Aorta (tissue), 5 donors: ENCODE measurements at regions of chr18 and their contacts with region 1.

Region 1: GRCh38 chr18:12236934-12237832 is 17.0 kb upstream of the CIDEA start:
- DNase-seq: peak; percentile 86 to 92
- ATAC-seq: peak; percentile 85
- H3K4me3 ChIP-seq: no peak overlapping the region
- H3K27ac ChIP-seq: no peak overlapping the region
- H3K4me1 ChIP-seq: peaks cover 0 to 2% of the 10 kb centered on the region in 2 donors
- H3K27me3 ChIP-seq: no peaks in the 10 kb centered on the region

Region 2: GRCh38 chr18:12049978-12050811 is 187.0 kb before region 1 on chr18:
- intact Hi-C with region 1: no loop called
- DNase-seq: no peak
- ATAC-seq: no peak
- H3K4me3 ChIP-seq: no peak overlapping the region
- H3K27ac ChIP-seq: no peak overlapping the region
- H3K4me1 ChIP-seq: no peaks in the 10 kb centered on the region
- H3K27me3 ChIP-seq: no peaks in the 10 kb centered on the region

Region 3: GRCh38 chr18:12060182-12060870 is 176.9 kb before region 1 on chr18:
- intact Hi-C with region 1: loop called in 1 of 2 experiments (anchors 10 kb)
- DNase-seq: no peak
- ATAC-seq: peak; percentile 23
- H3K4me3 ChIP-seq: no peak overlapping the region
- H3K27ac ChIP-seq: no peak overlapping the region
- H3K4me1 ChIP-seq: no peaks in the 10 kb centered on the region
- H3K27me3 ChIP-seq: no peaks in the 10 kb centered on the region